Activated B cell treated with CpG ODN at 0.5 μM for 24 hours (primary cell): ENCODE measurements at regions of chr4 and their contacts with region 1.

Region 1: DNA sequence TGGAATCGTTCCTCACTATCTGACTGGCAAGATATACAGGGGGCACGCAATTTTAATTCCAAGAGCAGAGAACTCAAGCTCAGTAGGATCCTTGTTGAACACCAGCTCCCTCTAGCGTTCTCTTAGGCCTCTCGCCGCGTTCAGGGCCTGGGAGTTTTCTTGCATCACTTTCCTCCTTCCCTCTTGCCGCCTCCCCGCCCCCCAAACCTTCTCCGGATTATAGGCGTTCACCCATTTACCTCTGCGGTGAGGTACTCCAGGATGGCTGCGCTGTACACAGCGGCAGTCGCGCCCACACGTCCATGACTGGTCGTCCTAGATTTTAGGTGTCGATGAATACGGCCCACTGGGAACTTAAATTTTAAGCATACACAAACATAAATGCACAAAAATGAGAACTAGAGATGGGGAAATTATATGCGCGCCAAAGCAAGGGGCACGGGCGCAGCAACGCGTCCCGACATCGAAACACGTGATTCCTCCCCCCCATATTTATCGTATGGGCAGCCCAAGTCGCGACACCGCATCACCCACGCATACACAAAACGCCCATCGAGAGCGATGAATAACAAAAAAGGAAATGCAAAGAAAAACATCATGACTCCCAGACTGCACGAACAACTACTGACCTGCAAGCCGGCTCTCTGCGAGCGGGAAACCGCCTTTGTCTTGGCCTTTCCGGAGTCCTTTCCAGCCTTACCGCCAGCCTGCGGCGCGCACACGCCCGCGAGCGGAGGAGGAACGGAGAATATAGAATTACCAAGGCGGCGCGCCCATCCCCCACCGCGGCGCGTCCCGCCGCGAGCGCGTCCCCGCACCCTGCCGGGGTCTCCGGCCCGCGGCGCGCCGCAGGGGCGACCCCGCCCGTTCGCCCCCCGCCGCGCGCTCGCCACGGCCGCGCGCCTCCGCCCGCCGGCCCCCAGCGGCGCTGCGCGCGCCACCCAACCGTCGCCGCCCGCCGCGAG is 759 bp downstream of the H2AZ1 start:
- DNase-seq: peak; percentile 69
- ATAC-seq: peak; percentile 32
- H3K4me3 Mint-ChIP-seq: no peak overlapping the region
- H3K27ac Mint-ChIP-seq: no peak overlapping the region
- H3K4me1 Mint-ChIP-seq: peaks cover 31% of the 10 kb centered on the region
- H3K27me3 Mint-ChIP-seq: no peaks in the 10 kb centered on the region
- CTCF ChIP-seq: no peak

Region 2: DNA sequence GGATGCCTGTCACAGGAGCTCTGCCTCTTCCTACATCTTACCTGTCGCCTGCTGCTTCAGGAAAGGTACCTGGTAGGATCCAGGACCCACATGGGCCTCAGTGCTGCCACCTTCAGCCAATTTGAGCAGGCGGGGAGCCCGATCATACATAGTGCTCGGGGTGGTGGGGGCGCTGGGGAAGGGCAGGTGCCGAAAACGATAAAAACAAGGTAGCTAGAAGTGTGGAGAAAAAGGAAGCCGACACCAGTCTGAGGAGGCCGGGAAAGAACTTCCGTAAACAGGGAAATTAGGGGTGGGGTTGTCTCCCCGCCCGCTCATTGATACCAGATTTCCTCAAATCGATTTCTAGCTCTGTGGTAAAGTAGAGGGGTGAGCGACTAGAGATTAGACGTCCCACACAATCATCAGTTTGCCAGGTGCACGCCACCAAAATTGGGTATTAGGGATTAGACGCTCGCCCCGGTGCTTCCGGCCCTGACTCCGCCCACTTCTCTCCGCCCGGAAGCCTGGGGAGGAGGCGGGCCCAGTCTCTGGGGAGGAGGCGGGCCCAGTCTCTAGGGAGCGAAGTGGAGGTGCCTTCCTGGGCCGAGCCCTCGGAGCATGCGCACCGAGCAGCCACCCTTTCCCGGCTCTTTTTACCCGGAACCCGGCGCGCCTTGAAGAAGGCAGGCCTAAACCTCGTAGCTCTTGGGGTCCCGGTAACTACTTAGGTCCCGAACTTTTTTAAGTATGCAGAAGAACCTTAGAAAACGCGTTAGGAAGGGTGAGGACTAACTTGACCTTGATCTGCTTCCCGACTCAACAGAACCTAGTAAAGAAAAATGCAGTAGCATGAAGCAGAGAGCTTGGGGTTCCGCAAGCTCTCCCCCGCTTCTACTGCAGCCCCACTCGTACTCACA is 1806.1 kb before region 1 on chr4 and contains the start of gene STPG2:
- CTCF ChIA-PET with region 1: no interaction called
- POLR2A ChIA-PET with region 1: interaction called, 7 read pairs
- intact Hi-C with region 1: loop called (anchors 5 kb)
- DNase-seq: peak; percentile 97
- ATAC-seq: peak; percentile 99
- H3K4me3 Mint-ChIP-seq: peak within 1 kb of the TSS; percentile 92
- H3K27ac Mint-ChIP-seq: peak within 1 kb of the TSS; percentile 97
- H3K4me1 Mint-ChIP-seq: peaks cover 25% of the 10 kb centered on the region
- H3K27me3 Mint-ChIP-seq: no peaks in the 10 kb centered on the region
- CTCF ChIP-seq: no peak
- total RNA-seq, gene STPG2: 0.37 and 0.69 TPM in 2 replicates

Region 3: GRCh38 chr4:98260579-98261290 is 1688.6 kb before region 1 on chr4:
- CTCF ChIA-PET with region 1: no interaction called
- POLR2A ChIA-PET with region 1: interaction called, 6 read pairs
- intact Hi-C with region 1: loop called (anchors 1 kb)
- DNase-seq: peak; percentile 89
- ATAC-seq: peak; percentile 93
- H3K4me3 Mint-ChIP-seq: peak overlapping the region; percentile 95
- H3K27ac Mint-ChIP-seq: peak overlapping the region; percentile 94
- H3K4me1 Mint-ChIP-seq: peaks cover 48% of the 10 kb centered on the region
- H3K27me3 Mint-ChIP-seq: no peaks in the 10 kb centered on the region
- CTCF ChIP-seq: no peak

Region 4: GRCh38 chr4:99723612-99724011 is 225.7 kb before region 1 on chr4:
- CTCF ChIA-PET with region 1: no interaction called
- POLR2A ChIA-PET with region 1: no interaction called
- intact Hi-C with region 1: loop called (anchors 2 kb)
- DNase-seq: no peak
- ATAC-seq: no peak
- H3K4me3 Mint-ChIP-seq: no peak overlapping the region
- H3K27ac Mint-ChIP-seq: no peak overlapping the region
- H3K4me1 Mint-ChIP-seq: no peaks in the 10 kb centered on the region
- H3K27me3 Mint-ChIP-seq: peaks cover 6% of the 10 kb centered on the region
- CTCF ChIP-seq: no peak

Region 5: GRCh38 chr4:99816545-99817308 is 132.6 kb before region 1 on chr4 and contains the start of gene DAPP1:
- CTCF ChIA-PET with region 1: interaction called, 31 read pairs
- POLR2A ChIA-PET with region 1: interaction called, 43 read pairs
- intact Hi-C with region 1: loop called (anchors 1 kb)
- DNase-seq: peak; percentile 64
- ATAC-seq: peak; percentile 92
- H3K4me3 Mint-ChIP-seq: peak within 1 kb of the TSS; percentile 89
- H3K27ac Mint-ChIP-seq: peak within 1 kb of the TSS; percentile 88
- H3K4me1 Mint-ChIP-seq: peaks cover 75% of the 10 kb centered on the region
- H3K27me3 Mint-ChIP-seq: no peaks in the 10 kb centered on the region
- CTCF ChIP-seq: no peak
- total RNA-seq, gene DAPP1: 137 and 144 TPM in 2 replicates

Region 6: GRCh38 chr4:99915449-99915848 is 33.9 kb before region 1 on chr4:
- CTCF ChIA-PET with region 1: no interaction called
- POLR2A ChIA-PET with region 1: no interaction called
- intact Hi-C with region 1: no loop called
- DNase-seq: no peak
- ATAC-seq: no peak
- H3K4me3 Mint-ChIP-seq: no peak overlapping the region
- H3K27ac Mint-ChIP-seq: no peak overlapping the region
- H3K4me1 Mint-ChIP-seq: no peaks in the 10 kb centered on the region
- H3K27me3 Mint-ChIP-seq: no peaks in the 10 kb centered on the region
- CTCF ChIP-seq: no peak

Region 7: DNA sequence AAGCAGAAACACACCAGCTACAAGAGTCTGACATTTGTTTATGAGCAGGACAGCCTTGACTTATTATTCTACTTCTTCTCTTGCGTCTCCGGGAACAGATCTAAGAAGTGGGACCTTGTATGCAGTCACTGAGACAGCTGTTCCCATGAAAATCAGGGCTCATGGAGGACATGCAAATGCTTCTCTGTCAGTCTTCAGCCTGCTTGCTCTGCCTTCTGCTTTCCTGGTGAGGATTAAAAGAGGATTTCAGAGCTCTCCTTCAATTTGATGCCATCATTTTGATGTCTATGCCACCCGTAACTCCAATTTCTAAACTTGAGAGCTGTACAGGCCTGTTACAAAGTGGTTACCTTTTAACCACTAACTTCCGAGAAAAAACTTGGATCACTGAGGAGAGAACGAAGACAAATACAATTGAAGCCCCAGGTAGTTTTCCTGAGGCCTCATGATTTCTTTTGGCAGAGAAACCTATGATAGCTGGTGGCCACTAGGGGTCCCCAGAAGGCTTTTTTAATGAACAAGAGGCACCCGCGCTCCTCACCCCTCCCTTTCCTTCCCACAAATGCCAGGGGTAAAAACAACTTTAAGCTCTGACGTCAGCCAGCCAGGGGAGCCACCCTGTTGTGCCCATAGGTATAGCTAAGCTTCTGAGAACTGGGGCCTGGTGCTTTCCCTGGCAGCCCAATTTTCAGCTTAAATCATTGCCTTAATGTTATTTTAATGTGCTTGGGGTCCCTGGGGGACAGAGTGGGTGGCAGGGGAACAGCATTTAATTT is 144.0 kb after region 1 on chr4:
- CTCF ChIA-PET with region 1: interaction called, 4 read pairs
- POLR2A ChIA-PET with region 1: interaction called, 3 read pairs
- intact Hi-C with region 1: loop called (anchors 5 kb)
- DNase-seq: peak; percentile 58
- ATAC-seq: peak; percentile 97
- H3K4me3 Mint-ChIP-seq: no peak overlapping the region
- H3K27ac Mint-ChIP-seq: peak overlapping the region; percentile 78
- H3K4me1 Mint-ChIP-seq: peaks cover 32% of the 10 kb centered on the region
- H3K27me3 Mint-ChIP-seq: no peaks in the 10 kb centered on the region
- CTCF ChIP-seq: no peak